HEK293 (cell line): ENCODE measurements at regions of chr1 and their contacts with region 1.

Region 1: DNA sequence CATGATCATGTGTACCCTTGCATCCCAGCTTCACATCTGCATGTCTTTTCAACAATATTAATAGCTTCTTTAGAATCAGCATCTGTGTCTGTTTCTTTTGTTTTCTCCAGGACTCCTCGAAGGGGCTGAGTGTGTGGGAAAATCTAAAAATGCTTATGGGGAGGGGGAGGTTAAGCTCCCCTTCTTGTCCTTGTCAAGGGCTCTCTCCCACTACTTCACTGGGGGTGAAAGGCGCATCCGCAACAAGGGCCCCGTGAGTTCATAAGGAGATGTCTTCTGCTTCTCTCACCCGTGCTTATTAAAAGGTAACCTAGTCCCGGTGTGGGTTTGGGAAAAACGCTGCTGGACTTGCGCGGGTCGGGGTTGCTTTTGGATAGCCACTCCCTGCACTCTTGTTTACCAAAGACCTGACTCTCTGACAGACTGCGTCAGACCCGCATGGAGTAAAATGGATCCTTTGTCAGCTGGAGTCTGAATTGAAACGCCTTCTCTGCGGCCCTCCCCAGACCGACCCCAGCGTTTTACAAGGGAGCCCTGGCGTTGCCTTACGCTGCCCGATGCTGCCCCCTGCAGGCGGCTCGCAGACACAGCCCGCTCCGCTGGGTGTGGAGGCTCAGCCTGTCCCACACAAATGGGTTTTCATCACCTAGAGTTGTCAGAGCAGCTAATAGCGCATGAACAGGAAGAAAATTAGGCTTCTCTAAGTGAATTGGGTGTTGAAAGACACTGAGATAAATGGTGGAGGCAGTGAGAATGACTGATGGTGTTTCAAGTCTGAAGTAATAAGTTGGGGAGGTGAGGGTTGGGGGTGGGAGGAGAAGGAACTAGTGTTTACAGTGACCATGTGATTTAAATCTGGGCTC is 53.8 kb downstream of the IER5 start:
- H3K4me3 ChIP-seq: no peak overlapping the region
- H3K27ac ChIP-seq: no peak overlapping the region
- H3K4me1 ChIP-seq: no peaks in the 10 kb centered on the region
- CTCF ChIP-seq: peak; percentile 93

Region 2: GRCh38 chr1:181033799-181034451 is 108.4 kb before region 1 on chr1 and contains the start of gene MR1:
- CTCF ChIA-PET with region 1: interaction called, 106 read pairs
- POLR2A ChIA-PET with region 1: no interaction called
- H3K4me3 ChIP-seq: peak within 1 kb of the TSS; percentile 54
- H3K27ac ChIP-seq: peak within 1 kb of the TSS; percentile 43
- H3K4me1 ChIP-seq: no peaks in the 10 kb centered on the region
- CTCF ChIP-seq: no peak

Region 3: GRCh38 chr1:181099152-181100014 is 42.9 kb before region 1 on chr1:
- CTCF ChIA-PET with region 1: interaction called, 69 read pairs
- POLR2A ChIA-PET with region 1: interaction called, 21 read pairs
- H3K4me3 ChIP-seq: no peak overlapping the region
- H3K27ac ChIP-seq: peak overlapping the region; percentile 85
- H3K4me1 ChIP-seq: peaks cover 52% of the 10 kb centered on the region
- CTCF ChIP-seq: no peak

Region 4: GRCh38 chr1:181112071-181112929 is 30.0 kb before region 1 on chr1:
- CTCF ChIA-PET with region 1: interaction called, 22 read pairs
- POLR2A ChIA-PET with region 1: no interaction called
- H3K4me3 ChIP-seq: no peak overlapping the region
- H3K27ac ChIP-seq: no peak overlapping the region
- H3K4me1 ChIP-seq: no peaks in the 10 kb centered on the region; the same call in 1 of the 2 replicates
- CTCF ChIP-seq: no peak

Region 5: GRCh38 chr1:181152892-181153633 is 10.7 kb after region 1 on chr1:
- CTCF ChIA-PET with region 1: interaction called, 23 read pairs
- POLR2A ChIA-PET with region 1: no interaction called
- H3K4me3 ChIP-seq: no peak overlapping the region
- H3K27ac ChIP-seq: no peak overlapping the region
- H3K4me1 ChIP-seq: no peaks in the 10 kb centered on the region
- CTCF ChIP-seq: peak; percentile 40; the same call in 1 of the 2 replicates

Region 6: DNA sequence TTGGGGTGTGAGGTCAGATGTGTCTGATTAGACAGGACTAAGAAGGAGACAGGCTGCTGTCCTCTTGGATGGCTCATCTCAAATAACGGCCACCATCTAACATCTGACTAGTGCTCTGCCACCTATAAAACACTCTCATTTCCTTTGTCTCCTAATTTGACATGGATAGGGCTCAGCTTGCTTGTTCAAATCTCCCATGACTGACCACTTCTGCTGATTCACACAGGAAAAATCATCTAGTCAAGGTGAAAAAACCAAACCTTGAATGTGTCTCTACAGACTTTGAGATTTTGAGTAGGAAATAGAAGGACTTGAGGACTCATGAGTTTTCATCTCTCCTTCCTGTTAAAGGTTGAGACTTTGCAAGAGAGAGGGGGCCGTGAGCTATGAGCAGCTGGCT is 96.8 kb after region 1 on chr1:
- CTCF ChIA-PET with region 1: no interaction called
- POLR2A ChIA-PET with region 1: no interaction called
- H3K4me3 ChIP-seq: no peak overlapping the region
- H3K27ac ChIP-seq: no peak overlapping the region
- H3K4me1 ChIP-seq: no peaks in the 10 kb centered on the region
- CTCF ChIP-seq: no peak